ENCODE measurements at regions of chr4 and their contacts with region 1.

Region 1: DNA sequence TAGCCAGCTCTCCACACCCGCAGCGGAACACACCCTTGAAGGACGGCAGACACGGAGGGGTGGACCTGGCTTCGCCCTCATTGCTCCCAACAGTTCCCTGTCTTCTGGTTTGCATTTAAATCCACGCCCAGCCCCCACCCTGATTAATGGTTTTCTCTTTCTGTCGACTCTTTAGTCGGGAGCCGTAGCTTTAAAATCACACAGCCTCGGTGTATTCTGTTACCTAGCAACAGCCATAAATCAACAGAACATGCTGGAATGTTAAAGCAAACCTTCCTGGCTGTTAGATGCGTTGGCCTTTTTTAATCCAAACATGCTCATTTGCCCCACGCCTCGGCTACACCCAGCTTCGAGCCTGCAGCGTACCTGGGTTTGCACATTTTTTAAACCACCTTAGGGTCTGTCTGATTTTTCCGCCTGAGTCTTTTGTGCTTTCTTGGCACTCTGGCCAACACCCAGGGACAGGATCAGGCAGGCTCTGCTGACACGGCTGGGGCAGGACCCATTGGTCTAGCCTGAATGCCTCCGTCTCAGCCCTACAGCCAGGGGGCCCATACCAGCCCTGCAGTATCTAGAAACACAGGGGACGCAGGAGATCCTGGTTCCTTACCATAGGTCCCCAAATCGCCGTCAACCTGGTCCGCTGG is 21.4 kb upstream of the PPP2R2C start:
- DNase-seq: no peak
- H3K4me3 ChIP-seq: no peak overlapping the region
- H3K27ac ChIP-seq: no peak overlapping the region
- H3K4me1 ChIP-seq: peaks cover 0 to 6% (median 0%) of the 10 kb centered on the region in 4 donors
- H3K27me3 ChIP-seq: no peaks in the 10 kb centered on the region
- CTCF ChIP-seq: no peak
- EP300 ChIP-seq: no peak
- POLR2A ChIP-seq: no peak

Region 2: GRCh38 chr4:6532658-6533057 is 38.9 kb after region 1 on chr4:
- in situ Hi-C with region 1: no loop called
- intact Hi-C with region 1: loop called (anchors 1 kb)
- DNase-seq: no peak
- H3K4me3 ChIP-seq: no peak overlapping the region
- H3K27ac ChIP-seq: no peak overlapping the region
- H3K4me1 ChIP-seq: no peaks in the 10 kb centered on the region
- H3K27me3 ChIP-seq: no peaks in the 10 kb centered on the region
- CTCF ChIP-seq: no peak
- EP300 ChIP-seq: no peak
- POLR2A ChIP-seq: no peak

Measured in transverse colon (tissue), 4 donors.